ENCODE measurements at regions of chr1 and their contacts with region 1.

Region 1: GRCh38 chr1:114716304-114717170 is at the start of gene NRAS:
- DNase-seq: peak; percentile 93
- H3K4me3 Mint-ChIP-seq: peak within 1 kb of the TSS; percentile 99
- H3K27ac Mint-ChIP-seq: peak within 1 kb of the TSS; percentile 99
- H3K4me1 Mint-ChIP-seq: peaks cover 39% of the 10 kb centered on the region
- H3K27me3 Mint-ChIP-seq: no peaks in the 10 kb centered on the region
- total RNA-seq, gene NRAS: 57.5 and 62.1 TPM in 2 replicates

Region 2: GRCh38 chr1:113904674-113905434 is 811.7 kb before region 1 on chr1 and contains the starts of genes AP4B1 and DCLRE1B:
- intact Hi-C with region 1: loop called (anchors 5 kb)
- DNase-seq: peak; percentile 98
- H3K4me3 Mint-ChIP-seq: peak within 1 kb of the TSS; percentile 99
- H3K27ac Mint-ChIP-seq: peak within 1 kb of the TSS; percentile 95
- H3K4me1 Mint-ChIP-seq: peaks cover 58% of the 10 kb centered on the region
- H3K27me3 Mint-ChIP-seq: no peaks in the 10 kb centered on the region
- total RNA-seq, gene AP4B1: 36.3 and 40.9 TPM in 2 replicates
- total RNA-seq, gene DCLRE1B: 20.9 and 21.2 TPM in 2 replicates

Region 3: DNA sequence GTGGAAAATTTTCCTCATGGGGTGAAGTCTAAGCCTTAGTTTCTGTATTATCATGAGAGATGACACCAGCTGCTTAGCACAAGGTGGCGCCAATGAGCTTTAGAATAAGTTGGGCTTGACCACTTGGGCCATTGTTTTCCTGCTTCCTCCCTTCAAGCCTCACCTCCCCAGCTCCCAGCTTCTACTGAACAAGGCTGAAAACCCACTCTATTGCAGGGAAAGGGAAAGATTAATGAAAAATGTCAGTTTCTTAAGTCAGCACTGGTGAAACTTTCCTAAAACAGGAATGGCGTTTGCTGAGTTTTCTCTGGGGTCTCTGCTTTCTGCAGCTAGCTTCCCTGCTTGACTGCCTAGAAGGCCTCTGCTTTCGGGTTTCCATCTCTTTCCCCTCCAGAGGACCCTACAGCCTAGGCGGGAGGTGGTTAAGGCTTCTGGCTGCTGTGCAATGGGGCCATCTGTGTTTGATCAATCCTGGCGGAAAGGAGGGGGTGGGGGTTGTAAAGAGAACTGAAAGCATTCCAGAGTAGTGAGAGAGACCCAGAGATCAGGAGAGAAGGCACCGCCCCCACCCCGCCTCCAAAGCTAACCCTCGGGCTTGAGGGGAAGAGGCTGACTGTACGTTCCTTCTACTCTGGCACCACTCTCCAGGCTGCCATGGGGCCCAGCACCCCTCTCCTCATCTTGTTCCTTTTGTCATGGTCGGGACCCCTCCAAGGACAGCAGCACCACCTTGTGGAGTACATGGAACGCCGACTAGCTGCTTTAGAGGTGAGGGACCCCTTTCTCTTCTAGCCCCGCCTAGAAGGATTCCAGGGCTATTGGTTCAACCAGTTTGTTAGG is 737.5 kb before region 1 on chr1 and contains the start of gene OLFML3:
- intact Hi-C with region 1: loop called (anchors 10 kb)
- DNase-seq: no peak
- H3K4me3 Mint-ChIP-seq: no peak within 1 kb of the TSS
- H3K27ac Mint-ChIP-seq: peak within 1 kb of the TSS; percentile 11
- H3K4me1 Mint-ChIP-seq: peaks cover 43% of the 10 kb centered on the region
- H3K27me3 Mint-ChIP-seq: no peaks in the 10 kb centered on the region
- total RNA-seq, gene OLFML3: 0.10 TPM in 2 replicates

Region 4: DNA sequence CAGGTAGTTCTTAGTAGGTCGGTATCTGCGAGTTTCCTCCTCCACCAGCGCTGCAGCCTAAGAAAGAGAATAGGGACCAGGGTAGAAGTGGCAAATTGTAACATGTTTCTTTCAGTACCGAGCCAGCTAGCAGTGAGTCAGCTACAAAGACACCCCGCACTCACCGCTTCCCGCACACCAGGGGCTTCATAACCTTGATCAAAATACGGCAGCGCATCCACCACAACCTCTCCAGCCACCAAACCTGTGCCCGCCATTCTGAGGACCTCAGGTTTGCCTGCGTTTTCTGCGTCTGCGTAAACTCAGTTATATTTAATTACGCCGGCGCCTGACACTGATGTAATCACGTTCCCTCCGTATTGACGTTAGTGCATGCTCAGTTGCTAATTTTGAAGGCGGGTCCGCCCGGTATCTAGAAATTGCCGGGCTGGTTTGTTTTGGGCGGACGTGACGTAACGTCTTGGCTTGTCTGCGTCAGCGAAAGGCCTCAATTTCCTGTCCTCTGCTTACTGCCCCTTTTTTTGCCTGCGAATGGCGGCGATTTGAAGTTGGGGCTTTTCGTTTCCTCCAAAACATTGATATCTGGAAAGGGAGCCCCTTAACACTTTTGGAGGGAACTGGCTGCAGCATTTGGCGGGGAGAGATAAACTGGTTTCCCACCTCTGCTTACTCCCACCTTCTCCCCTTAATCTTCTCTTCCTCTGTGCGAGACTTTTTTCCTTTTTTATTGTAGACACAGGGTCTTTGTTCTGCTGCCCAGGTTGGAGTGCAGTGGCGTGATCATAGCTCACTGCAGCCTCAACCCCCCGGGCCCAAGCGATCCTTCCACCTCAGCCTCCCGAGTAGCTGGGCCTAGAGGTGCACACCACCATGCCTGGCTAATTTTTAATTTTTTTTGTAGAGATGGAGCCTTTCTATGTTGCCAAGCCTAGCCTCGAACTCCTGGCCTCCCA is 134.9 kb before region 1 on chr1 and contains the start of gene BCAS2:
- intact Hi-C with region 1: loop called (anchors 1 kb)
- DNase-seq: peak; percentile 94
- H3K4me3 Mint-ChIP-seq: peak within 1 kb of the TSS; percentile 91
- H3K27ac Mint-ChIP-seq: peak within 1 kb of the TSS; percentile 92
- H3K4me1 Mint-ChIP-seq: peaks cover 34% of the 10 kb centered on the region
- H3K27me3 Mint-ChIP-seq: peaks cover 5% of the 10 kb centered on the region
- total RNA-seq, gene BCAS2: 61.9 and 63.0 TPM in 2 replicates

Region 5: GRCh38 chr1:114660224-114660623 is 56.3 kb before region 1 on chr1:
- intact Hi-C with region 1: no loop called
- DNase-seq: no peak
- H3K4me3 Mint-ChIP-seq: no peak overlapping the region
- H3K27ac Mint-ChIP-seq: no peak overlapping the region
- H3K4me1 Mint-ChIP-seq: no peaks in the 10 kb centered on the region
- H3K27me3 Mint-ChIP-seq: peaks cover 16% of the 10 kb centered on the region

Region 6: GRCh38 chr1:114670083-114671010 is 46.2 kb before region 1 on chr1:
- intact Hi-C with region 1: loop called (anchors 1 kb)
- DNase-seq: peak; percentile 76
- H3K4me3 Mint-ChIP-seq: peak overlapping the region; percentile 89
- H3K27ac Mint-ChIP-seq: peak overlapping the region; percentile 20
- H3K4me1 Mint-ChIP-seq: peaks cover 8% of the 10 kb centered on the region
- H3K27me3 Mint-ChIP-seq: peaks cover 48% of the 10 kb centered on the region

Region 7: GRCh38 chr1:114729782-114730181 is 13.2 kb after region 1 on chr1:
- intact Hi-C with region 1: loop called (anchors 2 kb)
- DNase-seq: no peak
- H3K4me3 Mint-ChIP-seq: no peak overlapping the region
- H3K27ac Mint-ChIP-seq: no peak overlapping the region
- H3K4me1 Mint-ChIP-seq: peaks cover 12% of the 10 kb centered on the region
- H3K27me3 Mint-ChIP-seq: no peaks in the 10 kb centered on the region

Region 8: GRCh38 chr1:114741963-114742746 is 25.6 kb after region 1 on chr1:
- intact Hi-C with region 1: no loop called
- DNase-seq: no peak
- H3K4me3 Mint-ChIP-seq: no peak overlapping the region
- H3K27ac Mint-ChIP-seq: no peak overlapping the region
- H3K4me1 Mint-ChIP-seq: peaks cover 35% of the 10 kb centered on the region
- H3K27me3 Mint-ChIP-seq: no peaks in the 10 kb centered on the region

Region 9: DNA sequence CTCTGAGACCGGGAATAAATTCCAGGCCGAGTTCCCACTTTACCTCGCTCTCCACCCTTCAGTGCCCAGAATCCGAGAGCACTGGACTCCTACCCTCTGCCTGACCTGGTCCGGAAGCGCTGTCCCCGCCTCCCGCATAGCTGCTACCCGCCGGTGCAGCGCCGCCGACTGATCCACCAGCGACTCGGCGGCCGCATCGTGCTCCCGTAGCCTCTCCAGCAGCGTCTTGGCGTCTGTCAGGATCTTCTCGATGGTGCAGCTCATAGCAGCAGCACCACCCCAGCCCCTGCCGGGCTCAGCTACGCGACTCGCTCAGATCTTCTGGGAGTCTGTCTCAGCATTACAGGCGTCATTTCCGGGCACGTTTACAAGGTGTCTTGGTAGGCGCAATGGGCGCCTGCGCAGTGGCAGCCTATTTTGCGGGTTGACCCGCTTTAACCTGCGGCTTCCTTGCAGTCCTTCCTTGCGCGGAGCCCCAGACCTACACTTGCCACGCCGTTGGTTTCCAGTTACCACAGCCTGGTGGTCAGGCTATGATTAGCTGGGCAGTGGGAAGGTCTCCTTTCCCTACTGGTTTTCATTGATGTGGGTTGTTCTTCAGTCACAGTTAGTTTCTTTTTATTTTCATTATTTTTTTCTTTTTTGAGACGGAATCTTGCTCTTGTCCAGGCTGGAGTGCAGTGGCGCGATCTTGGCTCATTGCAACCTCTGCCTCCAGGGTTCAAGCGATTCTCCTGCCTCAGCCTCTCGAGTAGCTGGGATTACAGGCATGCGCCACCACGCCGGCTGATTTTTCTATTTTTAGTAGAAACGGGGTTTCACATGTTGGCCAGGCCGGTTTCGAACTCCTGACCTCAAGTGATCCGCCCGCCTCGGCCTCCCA is 64.0 kb after region 1 on chr1 and contains the start of gene SIKE1:
- intact Hi-C with region 1: loop called (anchors 1 kb)
- DNase-seq: peak; percentile 92
- H3K4me3 Mint-ChIP-seq: peak within 1 kb of the TSS; percentile 100
- H3K27ac Mint-ChIP-seq: peak within 1 kb of the TSS; percentile 96
- H3K4me1 Mint-ChIP-seq: peaks cover 34% of the 10 kb centered on the region
- H3K27me3 Mint-ChIP-seq: peaks cover 4% of the 10 kb centered on the region
- total RNA-seq, gene SIKE1: 59.4 and 65.0 TPM in 2 replicates

Measured in activated T-helper 1 cell treated with anti-CD3 and anti-CD28 coated beads, Interleukin-12 subunit alpha, Interleukin-12 subunit beta, Interleukin-2, Interleukin-4 antibody, amounts not matched to agents 30 ng/mL and 10 ng/mL and 1 ng/mL, durations not matched to agents 14 hours and 24 hours and 36 hours (primary cell).